Activated CD4-positive, alpha-beta T cell treated with anti-CD3 and anti-CD28 coated beads for 36 hours (primary cell): ENCODE measurements at regions of chr13 and their contacts with region 1.

Region 1: DNA sequence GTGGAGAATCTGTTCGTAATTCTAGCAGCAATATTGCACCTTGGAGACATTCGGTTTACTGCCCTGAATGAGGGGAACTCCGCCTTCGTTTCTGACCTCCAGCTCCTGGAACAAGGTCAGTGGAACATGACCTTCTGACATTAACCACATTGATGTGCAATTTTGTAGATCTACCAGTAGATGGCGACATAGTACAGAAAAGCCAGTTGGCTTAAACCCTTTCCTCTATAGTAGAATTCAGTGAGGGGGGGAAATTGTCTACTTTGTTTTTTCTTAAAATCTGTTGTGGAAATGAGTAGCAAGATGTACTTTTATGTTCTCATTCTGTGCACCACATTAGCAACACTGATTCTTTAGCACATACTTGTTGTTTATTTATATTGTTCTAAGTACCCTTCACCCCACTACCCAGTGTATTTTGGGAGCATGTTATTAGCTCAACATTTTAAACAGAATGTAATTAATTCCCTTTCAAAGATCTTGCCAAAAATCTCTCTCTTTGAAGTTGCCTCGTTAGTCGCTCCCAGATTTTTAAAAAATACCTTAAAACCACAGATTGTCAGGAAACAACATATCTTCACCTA is 332.2 kb downstream of the MYO16 start:
- DNase-seq: peak; percentile 16
- ATAC-seq: peak; percentile 66
- H3K4me3 Mint-ChIP-seq: no peak overlapping the region
- H3K27ac Mint-ChIP-seq: no peak overlapping the region
- H3K4me1 Mint-ChIP-seq: no peaks in the 10 kb centered on the region
- H3K27me3 Mint-ChIP-seq: peaks cover 5% of the 10 kb centered on the region

Region 2: DNA sequence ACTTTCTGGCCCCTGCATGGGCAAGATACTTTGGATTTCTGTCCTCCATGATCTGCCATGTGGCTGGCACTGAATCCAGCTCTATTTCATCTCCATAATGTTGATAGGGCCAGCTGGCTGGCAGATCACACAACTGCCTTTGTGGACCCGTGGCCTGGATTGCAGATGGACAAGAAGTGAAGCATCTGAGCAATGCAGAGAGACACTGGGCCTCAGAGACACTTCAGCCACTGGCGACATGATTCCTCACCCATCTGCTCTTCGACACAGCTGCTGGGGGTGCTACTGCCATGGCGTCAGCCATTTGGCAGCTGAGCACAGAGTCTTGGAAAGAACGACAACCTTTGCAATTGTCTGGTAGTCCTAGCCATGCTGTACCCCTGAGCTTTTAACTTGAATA is 411.7 kb before region 1 on chr13:
- CTCF ChIA-PET with region 1: no interaction called
- POLR2A ChIA-PET with region 1: no interaction called
- intact Hi-C with region 1: no loop called
- DNase-seq: no peak
- ATAC-seq: no peak
- H3K4me3 Mint-ChIP-seq: no peak overlapping the region
- H3K27ac Mint-ChIP-seq: no peak overlapping the region
- H3K4me1 Mint-ChIP-seq: no peaks in the 10 kb centered on the region
- H3K27me3 Mint-ChIP-seq: peaks cover 4% of the 10 kb centered on the region

Region 3: GRCh38 chr13:109145631-109146030 is 184.0 kb after region 1 on chr13:
- CTCF ChIA-PET with region 1: no interaction called
- POLR2A ChIA-PET with region 1: no interaction called
- intact Hi-C with region 1: loop called in 1 of 2 experiments (anchors 10 kb)
- DNase-seq: peak; percentile 31
- ATAC-seq: peak; percentile 49
- H3K4me3 Mint-ChIP-seq: no peak overlapping the region
- H3K27ac Mint-ChIP-seq: no peak overlapping the region
- H3K4me1 Mint-ChIP-seq: no peaks in the 10 kb centered on the region
- H3K27me3 Mint-ChIP-seq: peaks cover 29% of the 10 kb centered on the region

Region 4: GRCh38 chr13:110116072-110116487 is 1154.4 kb after region 1 on chr13:
- CTCF ChIA-PET with region 1: interaction called, 4 read pairs
- POLR2A ChIA-PET with region 1: no interaction called
- intact Hi-C with region 1: loop called (anchors 1 to 2 kb)
- DNase-seq: peak; percentile 78
- ATAC-seq: peak; percentile 70
- H3K4me3 Mint-ChIP-seq: no peak overlapping the region
- H3K27ac Mint-ChIP-seq: no peak overlapping the region
- H3K4me1 Mint-ChIP-seq: peaks cover 2% of the 10 kb centered on the region
- H3K27me3 Mint-ChIP-seq: peaks cover 34% of the 10 kb centered on the region

Region 5: DNA sequence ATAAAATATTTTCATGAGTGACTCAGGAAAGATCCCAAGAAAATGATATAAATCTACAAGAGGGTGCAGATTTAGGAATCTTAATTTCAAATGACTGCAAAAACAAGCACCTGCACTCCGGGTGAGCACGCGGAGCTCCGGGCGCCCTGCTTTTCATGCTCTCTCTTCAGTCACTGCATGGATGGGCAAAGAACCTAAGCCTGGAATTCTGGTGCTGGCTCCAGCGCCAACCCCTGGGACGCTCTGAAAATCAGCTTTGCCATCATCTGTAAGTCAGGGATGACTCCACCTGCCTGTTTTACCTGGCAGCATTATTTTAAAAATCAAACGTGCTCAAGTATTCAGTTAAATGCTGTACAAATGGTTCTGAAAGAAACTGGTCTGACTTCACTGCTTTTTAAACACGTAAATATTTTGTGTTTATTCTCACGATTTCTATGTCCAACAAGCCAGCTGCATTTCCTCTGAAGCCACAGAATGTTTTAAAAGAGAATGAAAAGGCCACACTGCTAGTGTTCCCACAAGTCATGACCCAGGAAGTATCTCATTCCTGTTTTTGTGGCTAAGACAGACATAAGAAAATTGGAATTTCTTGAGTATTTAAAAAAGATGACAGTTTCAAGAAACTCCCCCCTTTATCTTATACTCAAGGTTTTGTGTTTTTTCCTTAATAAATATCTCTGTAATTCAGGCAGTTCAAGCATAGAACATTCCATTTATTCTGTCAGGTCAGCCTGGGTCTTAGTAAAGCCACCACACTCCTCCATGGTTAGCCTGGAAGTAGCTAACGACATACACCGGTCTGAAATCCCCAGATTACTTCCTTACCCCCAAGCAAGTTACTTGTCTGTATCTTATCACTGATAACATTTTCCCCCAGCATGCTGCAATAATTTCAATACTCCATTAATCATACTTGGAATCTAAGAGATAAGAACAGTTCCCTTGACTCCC is 1264.3 kb after region 1 on chr13:
- CTCF ChIA-PET with region 1: no interaction called
- POLR2A ChIA-PET with region 1: no interaction called
- intact Hi-C with region 1: loop called in 1 of 2 experiments (anchors 1 kb)
- DNase-seq: no peak
- ATAC-seq: no peak
- H3K4me3 Mint-ChIP-seq: no peak overlapping the region
- H3K27ac Mint-ChIP-seq: no peak overlapping the region
- H3K4me1 Mint-ChIP-seq: no peaks in the 10 kb centered on the region
- H3K27me3 Mint-ChIP-seq: peaks cover 20% of the 10 kb centered on the region

Region 6: DNA sequence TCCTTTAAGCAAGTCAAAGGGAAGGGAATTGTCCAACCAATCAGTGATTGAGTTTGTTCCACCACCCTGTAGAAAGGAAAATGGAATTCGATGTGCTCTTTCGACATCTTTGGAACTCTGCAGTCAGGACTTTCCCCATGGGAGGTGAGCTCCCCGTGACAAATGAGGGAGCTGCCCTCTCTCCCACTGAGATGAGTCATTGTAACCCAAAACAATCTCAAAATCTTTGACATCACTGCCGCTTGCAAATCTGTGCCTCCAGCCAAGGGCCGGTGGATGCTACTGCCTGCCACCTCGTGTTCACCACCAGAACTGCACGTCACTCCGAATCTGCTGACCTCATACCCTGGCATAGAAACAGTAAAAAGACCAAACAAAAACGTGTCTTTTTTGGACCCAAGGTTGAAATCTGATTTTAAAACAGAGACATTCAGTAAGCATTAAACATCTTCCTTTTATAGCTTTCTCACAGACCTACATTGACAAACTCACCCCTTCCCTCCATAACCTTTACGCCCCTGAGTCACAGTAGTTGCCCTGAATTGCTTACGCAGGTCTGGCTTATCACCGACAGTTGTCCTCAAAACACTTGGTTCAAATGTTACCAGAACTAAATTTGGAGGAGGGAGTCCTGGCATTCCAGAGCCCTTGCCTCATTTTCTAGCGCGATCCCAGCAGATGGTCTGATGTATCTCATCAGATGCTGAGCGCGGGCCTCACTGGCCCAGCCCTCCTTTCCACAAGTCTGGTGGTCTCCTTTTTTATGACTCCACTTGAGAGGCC is 1450.7 kb after region 1 on chr13:
- CTCF ChIA-PET with region 1: no interaction called
- POLR2A ChIA-PET with region 1: no interaction called
- intact Hi-C with region 1: loop called (anchors 2 to 10 kb)
- DNase-seq: peak; percentile 87
- ATAC-seq: peak; percentile 86
- H3K4me3 Mint-ChIP-seq: no peak overlapping the region
- H3K27ac Mint-ChIP-seq: no peak overlapping the region
- H3K4me1 Mint-ChIP-seq: peaks cover 7% of the 10 kb centered on the region
- H3K27me3 Mint-ChIP-seq: peaks cover 71% of the 10 kb centered on the region